ENCODE measurements at regions of chr1 and their contacts with region 1.

Region 1: GRCh38 chr1:149886396-149887195 is 12.8 kb upstream of the BOLA1 start:
- DNase-seq: peak; percentile 91

Region 2: GRCh38 chr1:149844101-149844500 is 42.5 kb before region 1 on chr1:
- CTCF ChIA-PET with region 1: no interaction called
- POLR2A ChIA-PET with region 1: interaction called, 58 read pairs
- DNase-seq: no peak

Region 3: DNA sequence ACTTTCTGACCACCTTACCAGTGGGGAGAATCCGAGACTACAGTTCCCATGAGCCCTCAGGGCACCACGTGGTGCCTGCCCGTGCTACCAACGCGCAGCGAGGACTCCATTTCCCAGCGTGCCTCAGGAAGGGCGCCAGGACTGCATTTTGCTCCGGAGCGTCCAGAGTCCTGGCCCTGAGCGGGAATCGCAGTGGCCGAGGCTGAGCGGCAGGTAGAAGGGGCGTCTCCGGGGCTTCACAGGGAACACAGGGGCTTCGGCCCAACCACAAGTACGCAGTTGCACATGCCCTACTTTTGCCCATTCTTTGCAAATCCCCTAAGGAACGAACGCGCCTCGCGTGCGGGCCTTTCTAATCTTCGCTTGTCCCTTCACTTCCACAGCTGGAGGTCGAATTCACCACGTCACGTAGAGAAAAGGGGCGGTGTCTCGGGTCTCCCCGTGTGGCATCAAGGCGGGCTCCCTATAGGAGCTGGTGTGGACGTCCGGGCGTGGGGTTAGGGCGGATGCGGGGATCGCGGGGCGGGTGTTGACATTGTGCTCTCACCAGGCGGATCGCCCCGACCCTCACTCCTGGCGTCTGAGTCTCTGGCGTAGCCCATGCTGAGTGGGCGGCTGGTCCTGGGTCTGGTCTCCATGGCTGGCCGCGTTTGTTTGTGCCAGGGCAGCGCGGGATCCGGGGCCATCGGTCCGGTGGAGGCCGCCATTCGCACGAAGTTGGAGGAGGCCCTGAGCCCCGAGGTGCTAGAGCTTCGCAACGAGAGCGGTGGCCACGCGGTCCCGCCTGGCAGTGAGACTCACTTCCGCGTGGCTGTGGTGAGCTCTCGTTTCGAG is 13.1 kb after region 1 on chr1 and contains the start of gene BOLA1:
- CTCF ChIA-PET with region 1: interaction called, 4 read pairs
- POLR2A ChIA-PET with region 1: interaction called, 45 read pairs
- DNase-seq: peak; percentile 97

Region 4: DNA sequence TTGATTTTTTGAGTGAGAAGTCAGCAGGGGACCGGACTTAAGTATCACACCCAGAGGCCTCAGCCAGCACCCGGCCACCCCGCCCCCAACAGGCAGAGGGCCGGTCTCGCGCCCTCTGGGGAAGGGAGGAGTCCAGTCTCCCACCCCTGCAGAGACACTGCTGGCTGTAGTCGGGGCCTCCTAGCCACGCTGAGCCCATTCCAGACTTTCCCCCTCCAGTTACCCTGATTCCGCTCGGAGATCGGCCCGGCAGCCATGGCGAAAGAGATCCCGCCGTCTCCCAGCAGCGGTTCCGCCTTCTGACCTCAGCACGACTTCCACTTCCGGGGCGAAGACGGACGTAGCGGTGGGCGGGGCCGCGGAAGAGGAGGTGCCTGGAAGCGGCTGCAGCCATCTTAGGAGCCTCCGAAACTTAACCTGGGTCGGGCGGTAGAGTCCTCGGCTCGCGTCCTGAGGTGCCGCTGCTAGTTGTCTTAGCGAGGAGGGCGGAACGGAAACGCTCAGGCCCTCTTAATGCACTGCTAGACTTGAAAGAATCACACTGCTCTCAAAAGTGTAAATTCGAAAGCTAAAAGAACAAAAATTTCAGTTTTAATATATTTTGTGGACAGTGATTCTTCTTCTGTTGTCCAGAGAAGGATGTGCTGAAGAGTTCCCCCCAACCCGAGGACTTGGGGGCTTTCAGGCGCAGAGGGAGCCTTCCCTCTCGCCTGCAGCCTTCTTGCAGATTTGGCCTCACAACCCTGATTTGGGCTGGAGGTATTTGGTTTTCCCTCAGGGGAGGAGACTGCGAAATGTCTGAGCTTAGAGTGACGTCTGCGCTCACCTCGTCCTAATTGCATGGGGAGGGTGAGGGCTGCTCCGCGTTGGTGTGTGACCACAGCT is 41.1 kb after region 1 on chr1 and contains the start of gene SF3B4:
- CTCF ChIA-PET with region 1: no interaction called
- POLR2A ChIA-PET with region 1: interaction called, 133 read pairs
- DNase-seq: peak; percentile 95

Region 5: GRCh38 chr1:149942207-149942606 is 55.6 kb after region 1 on chr1:
- CTCF ChIA-PET with region 1: interaction called, 4 read pairs
- POLR2A ChIA-PET with region 1: interaction called, 133 read pairs
- DNase-seq: peak; percentile 69

Region 6: GRCh38 chr1:150067184-150068036 is 180.8 kb after region 1 on chr1 and contains the start of gene VPS45:
- CTCF ChIA-PET with region 1: interaction called, 3 read pairs
- POLR2A ChIA-PET with region 1: interaction called, 27 read pairs
- DNase-seq: peak; percentile 93

Region 7: GRCh38 chr1:150186789-150187559 is 300.4 kb after region 1 on chr1:
- CTCF ChIA-PET with region 1: interaction called, 4 read pairs
- POLR2A ChIA-PET with region 1: interaction called, 19 read pairs
- DNase-seq: peak; percentile 55

Measured in HEK293T (cell line).